AG04449 (cell line): ENCODE measurements at regions of chr3 and their contacts with region 1.

Region 1: DNA sequence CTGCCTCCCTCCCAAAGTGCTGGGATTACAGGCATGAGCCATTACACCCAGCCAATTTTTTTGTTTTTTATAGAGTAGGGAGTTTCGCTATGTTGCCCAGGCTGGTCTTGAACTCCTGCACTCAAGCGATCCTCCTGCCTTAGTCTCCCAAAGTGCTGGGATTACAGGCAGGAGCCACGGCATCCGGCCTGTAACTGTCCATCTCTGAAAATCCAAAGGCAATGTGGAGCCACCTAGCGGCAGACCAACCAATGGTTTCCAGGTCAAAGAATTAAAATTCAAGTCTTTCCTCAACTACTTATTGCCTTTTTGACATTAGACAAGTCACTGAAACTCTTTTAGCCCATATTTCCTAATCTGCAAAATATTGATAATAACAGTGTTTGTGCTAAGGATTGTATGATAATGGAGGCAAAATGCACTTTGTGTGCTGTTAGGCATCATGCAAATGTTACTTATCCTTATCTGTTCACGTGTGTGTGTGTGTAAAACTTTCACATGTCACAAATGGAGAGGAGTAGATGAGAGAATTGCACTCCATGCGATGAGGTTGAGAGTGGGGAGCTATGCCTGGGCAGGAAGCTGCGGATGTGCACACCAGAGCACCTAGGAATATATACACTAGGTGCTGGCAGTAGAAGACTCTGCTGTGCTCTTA is 48.7 kb downstream of the COL8A1 start:
- DNase-seq: no peak
- H3K4me3 ChIP-seq: no peak overlapping the region
- CTCF ChIP-seq: peak; percentile 62

Region 2: DNA sequence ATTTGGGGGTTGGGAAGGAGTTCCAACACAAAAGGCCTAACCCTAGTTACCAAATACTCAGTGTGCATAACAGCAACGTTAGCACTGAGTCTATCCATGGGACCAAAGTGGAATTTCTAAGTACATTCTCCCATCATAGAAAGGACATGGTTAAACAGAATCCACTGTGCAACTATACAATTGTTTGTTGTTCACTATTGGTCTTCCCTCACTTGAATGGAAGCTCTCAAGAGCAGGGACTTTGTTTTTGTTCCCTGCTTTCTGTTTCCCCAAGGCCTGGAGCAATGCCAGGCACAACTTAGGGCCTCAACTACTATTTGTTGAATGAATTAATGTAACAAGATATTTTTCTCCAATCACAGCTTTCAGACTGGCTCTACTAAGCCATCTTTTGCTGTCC is 23.1 kb before region 1 on chr3:
- CTCF ChIA-PET with region 1: interaction called, 10 read pairs
- POLR2A ChIA-PET with region 1: no interaction called
- DNase-seq: no peak
- H3K4me3 ChIP-seq: no peak overlapping the region
- CTCF ChIP-seq: no peak

Region 3: DNA sequence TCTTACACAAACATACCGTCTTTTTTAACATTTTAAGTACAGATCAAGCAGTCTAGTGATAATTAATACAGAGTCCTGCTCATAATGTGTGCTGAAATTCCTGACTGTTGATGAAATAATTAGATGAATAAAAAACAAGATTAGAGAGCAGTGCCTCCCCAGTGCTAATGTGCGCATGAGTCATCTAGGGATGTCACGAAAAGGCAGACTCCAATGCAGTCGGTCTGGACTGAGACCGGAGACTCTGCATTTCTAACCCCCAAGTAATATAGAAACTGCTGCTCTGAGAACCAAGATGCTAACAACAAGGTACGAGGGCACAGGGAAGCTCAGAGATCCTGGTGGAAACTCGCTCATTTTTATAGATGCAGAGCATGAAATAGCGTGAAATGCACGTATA is 12.8 kb after region 1 on chr3:
- CTCF ChIA-PET with region 1: interaction called, 15 read pairs
- POLR2A ChIA-PET with region 1: no interaction called
- DNase-seq: no peak
- H3K4me3 ChIP-seq: no peak overlapping the region
- CTCF ChIP-seq: no peak

Region 4: DNA sequence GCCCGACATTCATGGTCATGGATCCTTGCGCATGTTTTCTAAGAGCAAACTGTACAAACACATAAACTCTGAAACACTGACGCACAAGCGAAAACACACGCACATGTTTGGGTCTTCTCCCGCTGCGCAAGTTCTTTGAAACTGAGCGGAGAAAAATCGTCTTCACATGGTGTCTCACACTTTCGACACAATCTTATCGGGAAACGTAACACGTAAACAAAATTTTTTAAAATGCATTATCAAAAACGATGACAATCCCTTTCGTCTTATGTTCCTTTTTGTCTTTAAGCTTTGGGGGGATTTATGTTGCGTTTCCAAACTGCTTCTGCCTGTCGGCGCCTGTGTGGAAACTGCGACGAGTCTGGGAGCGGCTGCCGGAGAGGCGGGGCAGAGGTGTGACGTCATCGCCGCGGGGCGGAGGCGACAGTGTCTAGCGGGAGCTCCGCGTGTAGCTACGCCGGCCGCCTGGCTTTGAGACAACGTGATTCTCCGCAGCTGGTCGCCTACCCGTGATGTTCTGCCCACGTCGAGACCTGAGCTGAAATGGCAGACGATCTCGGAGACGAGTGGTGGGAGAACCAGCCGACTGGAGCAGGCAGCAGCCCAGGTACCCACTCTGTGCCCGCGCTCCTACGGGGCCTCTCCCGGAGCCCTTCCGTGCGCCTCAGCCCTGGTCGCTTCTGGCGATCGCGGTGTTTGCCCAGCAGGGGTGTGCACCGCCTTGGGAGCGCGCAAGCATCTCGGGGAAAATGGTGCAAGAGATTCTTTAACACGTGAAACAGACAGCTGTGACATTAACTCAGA is 130.6 kb after region 1 on chr3 and contains the start of gene CMSS1:
- CTCF ChIA-PET with region 1: no interaction called
- POLR2A ChIA-PET with region 1: no interaction called
- DNase-seq: no peak
- H3K4me3 ChIP-seq: peak within 1 kb of the TSS; percentile 86
- CTCF ChIP-seq: peak; percentile 45

Region 5: DNA sequence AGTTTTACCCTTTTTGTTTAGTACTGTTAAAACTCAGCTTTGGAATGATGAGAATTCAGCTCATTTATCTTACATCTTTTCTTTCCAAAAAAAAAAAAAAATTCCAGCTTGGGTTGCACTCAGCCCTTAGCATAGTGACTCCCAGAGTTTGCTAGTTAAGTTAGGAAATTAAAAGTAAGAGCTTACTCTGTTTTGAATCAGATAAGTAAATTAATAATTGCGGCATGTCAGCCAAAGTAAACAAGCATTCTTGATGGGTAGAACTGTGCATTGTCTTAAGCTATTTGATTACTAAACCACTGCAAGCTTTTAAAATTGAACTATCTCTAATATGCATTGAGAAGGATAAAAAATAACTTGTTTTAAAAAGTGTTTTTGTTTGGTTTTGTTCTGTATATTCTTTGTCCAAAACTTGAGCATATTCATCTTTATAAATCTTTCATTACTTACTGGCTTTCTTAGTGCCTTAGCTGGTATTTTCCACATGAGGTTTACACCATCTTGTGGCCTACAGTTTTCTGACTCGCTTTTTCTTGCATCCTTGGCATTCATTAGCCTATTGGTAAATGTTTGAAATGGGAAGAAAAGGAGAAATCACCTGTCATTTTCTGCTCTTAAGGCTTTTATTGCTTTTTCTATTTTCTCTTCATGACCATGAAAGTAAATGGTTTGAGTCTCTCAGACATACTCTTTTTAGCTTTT is 319.6 kb after region 1 on chr3:
- CTCF ChIA-PET with region 1: no interaction called
- POLR2A ChIA-PET with region 1: no interaction called
- DNase-seq: peak; percentile 10
- H3K4me3 ChIP-seq: no peak overlapping the region
- CTCF ChIP-seq: peak; percentile 10